Caco-2 (cell line): ENCODE measurements at regions of chr4 and their contacts with region 1.

Region 1: DNA sequence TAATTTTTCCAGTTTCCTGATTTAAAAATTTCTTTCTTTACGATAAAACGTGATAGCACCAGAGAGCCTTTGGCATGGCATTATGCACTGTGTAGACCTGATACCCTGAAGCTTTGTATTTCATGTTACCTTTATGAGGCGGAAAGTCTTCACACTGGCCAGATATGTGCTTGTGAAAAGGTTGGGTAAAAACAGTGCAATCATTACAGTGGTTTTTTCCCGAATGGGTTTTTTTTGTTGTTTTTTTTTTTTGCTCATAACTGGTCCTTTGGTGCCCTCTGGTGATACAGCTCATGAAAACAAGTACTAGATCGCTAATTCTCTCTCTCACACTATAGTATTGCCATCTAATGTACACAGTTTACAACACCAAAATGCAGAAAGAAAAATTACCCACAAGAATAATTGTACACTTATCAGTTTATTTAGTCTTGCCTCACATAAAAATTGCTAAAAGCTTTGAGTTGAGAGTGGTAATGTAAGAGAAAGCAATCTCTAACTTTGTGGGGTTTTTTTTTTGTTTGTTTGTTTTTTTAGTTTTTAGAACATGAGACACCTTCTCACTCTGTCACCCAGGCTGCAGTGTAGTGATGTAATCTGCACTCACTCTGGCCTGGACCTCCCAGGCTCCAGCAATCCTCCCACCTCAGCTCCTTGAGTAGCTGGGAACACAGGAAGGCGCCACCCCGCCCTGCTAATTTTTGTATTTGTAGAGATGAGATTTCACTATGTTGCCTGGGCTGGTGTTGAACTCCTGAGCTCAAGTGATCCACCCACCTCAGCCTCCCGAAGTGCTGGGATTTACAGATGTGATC is 21.3 kb downstream of the SPCS3 start:
- DNase-seq: peak in 1 of 2 experiments; percentile 34
- H3K4me3 ChIP-seq: no peak overlapping the region
- H3K4me3 Mint-ChIP-seq: no peak overlapping the region
- H3K27ac Mint-ChIP-seq: no peak overlapping the region
- H3K4me1 ChIP-seq: no peaks in the 10 kb centered on the region
- H3K4me1 Mint-ChIP-seq: peaks cover 6% of the 10 kb centered on the region
- H3K27me3 ChIP-seq: no peaks in the 10 kb centered on the region
- H3K27me3 Mint-ChIP-seq: no peaks in the 10 kb centered on the region
- CTCF ChIP-seq: peak; percentile 41 to 58

Region 2: DNA sequence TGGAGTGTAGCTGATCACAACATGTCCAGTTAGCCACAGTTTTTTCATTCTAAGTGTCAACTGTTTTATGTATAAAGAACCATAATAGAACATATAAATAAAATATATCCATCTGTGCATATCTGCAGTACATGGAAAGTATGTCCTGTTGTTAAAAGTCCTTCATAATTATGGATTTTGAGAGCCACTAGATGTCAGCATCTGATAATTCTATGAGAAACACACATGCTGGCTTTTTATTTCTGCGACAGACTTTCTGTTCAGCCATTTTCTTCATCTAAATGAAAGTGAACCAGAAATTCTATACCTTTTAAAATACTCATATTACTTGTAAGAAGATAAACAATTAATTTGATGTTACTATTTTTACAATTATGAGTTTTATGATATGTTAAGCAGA is 780.5 kb before region 1 on chr4:
- CTCF ChIA-PET with region 1: no interaction called
- POLR2A ChIA-PET with region 1: no interaction called
- intact Hi-C with region 1: loop called (anchors 2 kb)
- DNase-seq: no peak
- H3K4me3 ChIP-seq: no peak overlapping the region
- H3K4me3 Mint-ChIP-seq: no peak overlapping the region
- H3K27ac Mint-ChIP-seq: no peak overlapping the region
- H3K4me1 ChIP-seq: no peaks in the 10 kb centered on the region
- H3K4me1 Mint-ChIP-seq: no peaks in the 10 kb centered on the region
- H3K27me3 ChIP-seq: no peaks in the 10 kb centered on the region
- H3K27me3 Mint-ChIP-seq: peaks cover 3% of the 10 kb centered on the region
- CTCF ChIP-seq: peak in 1 of 2 experiments; percentile 23

Region 3: DNA sequence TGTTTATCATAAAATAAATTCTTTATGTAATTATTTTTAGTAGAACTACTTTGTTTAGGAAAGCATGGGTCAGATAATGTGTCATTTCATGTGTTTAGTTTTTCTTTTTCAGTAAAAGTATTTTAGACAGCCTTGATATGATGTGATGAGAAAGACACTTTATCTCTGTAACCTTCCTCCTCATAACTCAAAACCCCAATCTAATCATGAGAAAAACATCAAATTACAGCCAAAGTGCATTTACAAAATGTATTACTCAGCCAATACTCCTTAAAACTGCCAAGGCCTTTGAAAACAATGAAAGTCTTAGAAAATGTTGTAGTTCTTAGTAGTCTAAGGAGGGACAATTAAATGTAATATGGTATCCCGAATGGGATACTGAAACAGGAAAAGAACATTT is 674.0 kb before region 1 on chr4:
- CTCF ChIA-PET with region 1: no interaction called
- POLR2A ChIA-PET with region 1: no interaction called
- intact Hi-C with region 1: no loop called
- DNase-seq: no peak
- H3K4me3 ChIP-seq: no peak overlapping the region
- H3K4me3 Mint-ChIP-seq: no peak overlapping the region
- H3K27ac Mint-ChIP-seq: no peak overlapping the region
- H3K4me1 ChIP-seq: no peaks in the 10 kb centered on the region
- H3K4me1 Mint-ChIP-seq: no peaks in the 10 kb centered on the region
- H3K27me3 ChIP-seq: no peaks in the 10 kb centered on the region
- H3K27me3 Mint-ChIP-seq: peaks cover 3% of the 10 kb centered on the region
- CTCF ChIP-seq: no peak

Region 4: DNA sequence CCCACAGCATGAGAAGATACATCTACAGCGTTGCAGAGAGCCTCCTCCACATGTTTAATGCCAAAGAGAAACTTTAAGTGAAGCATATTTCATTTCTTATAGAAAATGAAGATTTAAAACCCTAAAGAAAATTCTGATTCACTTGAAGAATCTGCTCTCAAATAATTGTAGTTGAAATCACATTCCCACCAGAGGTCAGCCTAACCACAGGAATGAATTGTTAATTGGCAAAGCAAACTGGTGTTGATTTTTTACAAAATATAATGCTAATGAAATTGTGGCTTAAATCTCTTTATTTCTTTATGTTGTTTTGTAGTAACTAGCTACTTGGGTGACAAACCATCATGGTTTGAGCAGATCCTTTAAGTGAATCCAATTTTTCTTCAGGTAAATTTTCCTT is 306.6 kb before region 1 on chr4:
- CTCF ChIA-PET with region 1: interaction called, 4 read pairs
- POLR2A ChIA-PET with region 1: no interaction called
- intact Hi-C with region 1: loop called (anchors 1 kb)
- DNase-seq: peak in 1 of 2 experiments; percentile 24
- H3K4me3 ChIP-seq: no peak overlapping the region
- H3K4me3 Mint-ChIP-seq: no peak overlapping the region
- H3K27ac Mint-ChIP-seq: no peak overlapping the region
- H3K4me1 ChIP-seq: no peaks in the 10 kb centered on the region
- H3K4me1 Mint-ChIP-seq: no peaks in the 10 kb centered on the region
- H3K27me3 ChIP-seq: no peaks in the 10 kb centered on the region
- H3K27me3 Mint-ChIP-seq: no peaks in the 10 kb centered on the region
- CTCF ChIP-seq: no peak

Region 5: GRCh38 chr4:176150356-176150682 is 190.8 kb before region 1 on chr4:
- CTCF ChIA-PET with region 1: interaction called, 11 read pairs
- POLR2A ChIA-PET with region 1: no interaction called
- intact Hi-C with region 1: loop called (anchors 1 kb)
- DNase-seq: peak in 1 of 2 experiments; percentile 3
- H3K4me3 ChIP-seq: no peak overlapping the region
- H3K4me3 Mint-ChIP-seq: no peak overlapping the region
- H3K27ac Mint-ChIP-seq: no peak overlapping the region
- H3K4me1 ChIP-seq: no peaks in the 10 kb centered on the region
- H3K4me1 Mint-ChIP-seq: no peaks in the 10 kb centered on the region
- H3K27me3 ChIP-seq: no peaks in the 10 kb centered on the region
- H3K27me3 Mint-ChIP-seq: no peaks in the 10 kb centered on the region
- CTCF ChIP-seq: peak in 1 of 2 experiments; percentile 21

Region 6: DNA sequence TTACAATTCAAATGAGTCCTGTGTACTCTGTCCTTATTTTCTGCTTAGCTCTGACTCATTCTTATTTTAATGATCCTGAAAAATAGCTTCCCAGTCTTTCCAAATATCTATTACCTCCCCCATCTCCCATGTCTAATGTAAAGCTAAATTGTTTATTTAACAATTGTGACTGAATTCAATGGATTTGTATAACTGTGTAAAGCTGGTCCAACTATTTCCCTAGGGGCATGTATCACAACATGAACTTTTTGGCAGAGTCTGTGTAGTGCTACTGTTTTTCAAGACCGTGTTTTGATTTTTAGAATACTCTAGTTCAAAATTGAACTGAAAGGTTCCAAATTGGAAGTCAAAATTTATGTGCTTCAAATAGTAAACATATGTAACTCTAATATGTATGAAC is 46.5 kb after region 1 on chr4:
- CTCF ChIA-PET with region 1: no interaction called
- POLR2A ChIA-PET with region 1: no interaction called
- intact Hi-C with region 1: no loop called
- DNase-seq: no peak
- H3K4me3 ChIP-seq: no peak overlapping the region
- H3K4me3 Mint-ChIP-seq: no peak overlapping the region
- H3K27ac Mint-ChIP-seq: no peak overlapping the region
- H3K4me1 ChIP-seq: no peaks in the 10 kb centered on the region
- H3K4me1 Mint-ChIP-seq: no peaks in the 10 kb centered on the region
- H3K27me3 ChIP-seq: no peaks in the 10 kb centered on the region
- H3K27me3 Mint-ChIP-seq: peaks cover 6% of the 10 kb centered on the region
- CTCF ChIP-seq: no peak